Heart right ventricle (tissue), 16 donors: ENCODE measurements at regions of chr16 and their contacts with region 1.

Region 1: DNA sequence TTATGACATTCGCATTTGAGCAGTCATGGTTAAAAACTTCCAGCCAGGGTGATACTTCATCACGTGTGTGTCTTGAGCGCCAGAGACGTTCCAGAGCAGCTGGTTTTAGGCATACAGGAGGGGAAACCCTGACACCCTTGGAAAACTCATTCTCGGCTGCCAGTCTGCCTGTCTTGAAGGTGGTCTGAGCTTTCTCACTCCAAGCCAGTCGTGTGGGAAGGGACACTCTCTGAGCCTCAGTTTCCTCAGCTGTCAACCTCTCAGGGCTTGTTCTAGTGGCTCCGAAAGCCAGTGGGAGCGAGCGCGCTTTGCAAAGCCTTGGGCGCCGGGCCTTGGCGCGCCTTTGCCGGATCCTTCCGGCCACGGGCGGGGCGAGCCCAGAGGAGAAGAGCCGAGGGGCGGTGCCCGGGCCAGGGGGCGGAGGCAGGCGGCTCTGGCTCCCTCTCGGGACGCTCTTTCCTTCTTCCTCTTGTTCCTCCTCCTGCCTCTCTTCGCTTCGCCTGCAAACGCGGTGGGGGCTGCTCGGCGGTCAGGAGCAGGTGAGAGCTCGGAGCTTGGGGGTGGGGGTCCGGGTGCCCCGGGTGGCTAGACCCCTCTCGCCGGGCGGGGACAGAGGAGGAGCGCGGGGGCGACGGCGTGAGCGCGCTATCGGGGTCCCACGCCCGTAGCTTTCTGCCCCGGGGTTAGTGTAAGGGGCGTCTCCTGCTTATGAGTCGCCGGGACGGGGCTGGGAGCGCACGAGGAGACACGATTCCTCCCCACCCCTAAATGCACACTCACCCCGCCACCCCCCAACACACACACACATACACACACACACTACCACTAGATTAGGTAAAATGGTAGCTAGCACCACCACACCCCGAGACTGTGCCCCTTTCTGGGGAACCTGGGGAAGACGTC is at the start of gene LDAF1:
- DNase-seq: peak; percentile 82 to 88
- ATAC-seq: peak; percentile 89 to 95 (median 92)
- H3K4me3 ChIP-seq: peak within 1 kb of the TSS; percentile 62 to 89 (median 85)
- H3K27ac ChIP-seq: peak within 1 kb of the TSS; percentile 65 to 95 (median 86)
- H3K4me1 ChIP-seq: peaks cover 10 to 59% (median 49%) of the 10 kb centered on the region in 9 donors
- H3K27me3 ChIP-seq: no peaks in the 10 kb centered on the region
- CTCF ChIP-seq: peak in 4 of 9 donors; percentile 7 to 26 (median 16)
- total RNA-seq, gene LDAF1: 116 to 182 (median 143) TPM

Region 2: GRCh38 chr16:20849587-20850390 is 308.7 kb before region 1 on chr16:
- intact Hi-C with region 1: loop called in 1 of 10 experiments (anchors 5 kb)
- DNase-seq: peak; percentile 68 to 69
- ATAC-seq: peak in 7 of 8 donors; percentile 16 to 49 (median 38)
- H3K4me3 ChIP-seq: peak overlapping the region in 1 of 10 donors; percentile 12
- H3K27ac ChIP-seq: peak overlapping the region in 8 of 10 donors; percentile 69 to 87 (median 74)
- H3K4me1 ChIP-seq: peaks cover 15 to 71% (median 51%) of the 10 kb centered on the region in 9 donors
- H3K27me3 ChIP-seq: no peaks in the 10 kb centered on the region
- CTCF ChIP-seq: peak; percentile 94 to 99 (median 98)

Region 3: GRCh38 chr16:21300309-21301167 is 142.1 kb after region 1 on chr16:
- intact Hi-C with region 1: loop called in 6 of 10 experiments (anchors 1 to 10 kb)
- DNase-seq: peak; percentile 72 to 98
- ATAC-seq: peak; percentile 93 to 99 (median 96)
- H3K4me3 ChIP-seq: peak overlapping the region; percentile 7 to 79 (median 64)
- H3K27ac ChIP-seq: peak overlapping the region; percentile 14 to 87 (median 73)
- H3K4me1 ChIP-seq: peaks cover 0 to 19% (median 7%) of the 10 kb centered on the region in 9 donors
- H3K27me3 ChIP-seq: peaks cover 0 to 22% (median 0%) of the 10 kb centered on the region in 7 donors
- CTCF ChIP-seq: peak; percentile 62 to 97 (median 82)

Region 4: GRCh38 chr16:21565861-21566669 is 407.6 kb after region 1 on chr16:
- intact Hi-C with region 1: loop called in 2 of 10 experiments (anchors 10 kb)
- DNase-seq: no peak
- ATAC-seq: no peak
- H3K4me3 ChIP-seq: no peak overlapping the region
- H3K27ac ChIP-seq: no peak overlapping the region
- H3K4me1 ChIP-seq: peaks cover 0 to 5% (median 0%) of the 10 kb centered on the region in 9 donors
- H3K27me3 ChIP-seq: peaks cover 0 to 8% (median 0%) of the 10 kb centered on the region in 7 donors
- CTCF ChIP-seq: no peak

Region 5: GRCh38 chr16:22077700-22078313 is 919.3 kb after region 1 on chr16:
- intact Hi-C with region 1: loop called in 1 of 10 experiments (anchors 5 kb)
- DNase-seq: peak; percentile 37 to 67
- ATAC-seq: peak in 6 of 8 donors; percentile 38 to 70 (median 54)
- H3K4me3 ChIP-seq: no peak overlapping the region
- H3K27ac ChIP-seq: no peak overlapping the region
- H3K4me1 ChIP-seq: peaks cover 0 to 12% (median 3%) of the 10 kb centered on the region in 9 donors
- H3K27me3 ChIP-seq: no peaks in the 10 kb centered on the region
- CTCF ChIP-seq: peak; percentile 76 to 91 (median 83)

Region 6: DNA sequence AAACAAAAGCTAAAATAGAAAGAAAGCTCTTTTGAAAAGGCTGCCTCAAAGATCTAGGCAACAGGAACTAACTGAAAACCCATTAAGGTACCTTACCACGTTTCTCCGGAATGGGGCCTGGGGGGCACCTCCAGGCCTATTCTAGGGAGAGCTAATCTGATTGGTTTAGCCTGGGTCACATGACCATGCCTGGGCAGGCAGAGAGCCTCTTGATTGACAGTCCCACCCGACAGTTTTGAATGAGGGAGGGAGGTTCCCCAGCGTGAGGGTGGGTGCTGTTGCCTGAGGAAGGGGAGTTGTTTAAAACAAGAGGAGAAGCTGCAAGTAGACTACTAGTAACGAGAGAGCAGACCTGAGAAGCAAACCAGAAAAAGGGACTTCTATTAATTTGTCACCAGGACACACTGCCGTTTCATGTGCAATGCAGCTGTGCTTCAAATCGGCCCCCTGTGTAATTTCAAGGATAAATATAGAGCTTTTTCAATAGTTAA is 1512.1 kb after region 1 on chr16:
- intact Hi-C with region 1: loop called in 3 of 10 experiments (anchors 5 to 10 kb)
- DNase-seq: no peak
- ATAC-seq: peak in 2 of 8 donors; percentile 31 to 42
- H3K4me3 ChIP-seq: no peak overlapping the region
- H3K27ac ChIP-seq: no peak overlapping the region
- H3K4me1 ChIP-seq: peaks cover 0 to 33% (median 6%) of the 10 kb centered on the region in 9 donors
- H3K27me3 ChIP-seq: peaks cover 0 to 17% (median 7%) of the 10 kb centered on the region in 7 donors
- CTCF ChIP-seq: no peak